ENCODE measurements at regions of chr15 and their contacts with region 1.

Region 1: GRCh38 chr15:95464509-95464908 is 866.0 kb upstream of the NR2F2 start:
- DNase-seq: peak; percentile 81

Region 2: DNA sequence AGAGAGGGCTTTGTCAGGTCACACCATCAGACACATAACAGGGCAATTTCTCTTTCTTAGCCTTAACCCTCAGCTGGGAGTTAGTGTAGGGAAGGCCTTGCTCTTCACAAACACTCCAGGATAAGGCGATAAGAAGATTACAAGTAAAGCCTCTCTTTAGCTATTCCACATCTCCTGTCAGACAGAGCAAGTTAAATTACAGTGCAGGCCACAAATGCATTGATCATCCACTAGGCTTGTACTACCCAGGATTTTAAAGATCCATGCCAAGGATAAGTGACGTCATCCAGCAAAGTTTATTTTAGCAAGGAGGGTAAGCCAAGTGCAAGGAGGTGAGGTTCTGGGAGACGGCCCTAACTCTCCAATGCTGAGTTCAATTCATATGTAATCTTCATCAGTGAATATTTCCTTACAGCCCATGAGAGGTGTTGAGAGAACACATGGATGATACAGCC is 24.6 kb before region 1 on chr15:
- intact Hi-C with region 1: no loop called
- DNase-seq: no peak

Region 3: GRCh38 chr15:95486224-95486623 is 21.7 kb after region 1 on chr15:
- intact Hi-C with region 1: no loop called
- DNase-seq: no peak

Region 4: GRCh38 chr15:95981209-95981608 is 516.7 kb after region 1 on chr15:
- intact Hi-C with region 1: loop called in 1 of 2 experiments (anchors 5 kb)
- DNase-seq: no peak

Measured in posterior vena cava (tissue), 2 donors.